CD8-positive, alpha-beta T cell (primary cell): ENCODE measurements at regions of chr17 and their contacts with region 1.

Region 1: DNA sequence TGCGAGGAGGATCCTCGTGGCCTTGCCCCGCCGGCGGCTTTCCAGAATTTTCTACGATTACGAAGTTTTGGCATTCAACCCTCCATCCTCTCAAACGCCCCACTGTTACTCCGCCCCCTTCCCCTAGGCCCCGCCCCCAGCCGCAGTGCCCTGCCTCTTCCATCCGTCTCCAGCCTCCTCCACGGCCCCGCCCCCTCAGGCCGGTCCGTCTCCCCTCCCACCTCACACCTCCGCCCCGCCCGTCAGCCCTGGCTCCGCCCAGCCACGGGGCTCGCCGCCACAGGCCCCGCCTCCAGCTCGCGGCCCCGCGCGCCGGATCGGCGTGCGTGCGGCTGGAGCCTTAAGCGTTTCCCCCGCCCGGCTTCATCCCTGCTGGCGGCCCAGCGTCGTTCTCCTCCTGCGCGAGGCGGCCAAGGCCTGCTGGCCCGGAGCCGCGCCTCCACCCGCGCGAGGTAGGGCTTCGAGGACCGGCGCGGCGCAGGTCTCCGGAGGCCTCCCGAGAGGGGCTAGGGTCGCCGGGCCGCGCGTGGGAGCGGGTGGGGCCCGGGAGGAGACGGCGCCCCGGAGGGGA is at the starts of genes C17orf67 and DGKE:
- DNase-seq: peak; percentile 96 to 99 (median 99)
- ATAC-seq: peak; percentile 88
- H3K4me3 ChIP-seq: peak within 1 kb of the TSS; percentile 78 to 97
- H3K4me3 Mint-ChIP-seq: peak within 1 kb of the TSS; percentile 96
- H3K27ac ChIP-seq: peak within 1 kb of the TSS; percentile 76 to 79
- H3K27ac Mint-ChIP-seq: peak within 1 kb of the TSS; percentile 93
- H3K4me1 ChIP-seq: peaks cover 55% of the 10 kb centered on the region
- H3K4me1 Mint-ChIP-seq: peaks cover 67% of the 10 kb centered on the region
- H3K27me3 ChIP-seq: no peaks in the 10 kb centered on the region
- H3K27me3 Mint-ChIP-seq: no peaks in the 10 kb centered on the region
- CTCF ChIP-seq: no peak
- total RNA-seq, gene C17orf67: 2.4 to 2.9 TPM
- total RNA-seq, gene DGKE: 24.4 to 25.4 TPM

Region 2: GRCh38 chr17:56592487-56593085 is 241.3 kb before region 1 on chr17:
- CTCF ChIA-PET with region 1: no interaction called
- POLR2A ChIA-PET with region 1: interaction called, 3 read pairs
- intact Hi-C with region 1: loop called (anchors 5 kb)
- DNase-seq: peak; percentile 33 to 87 (median 64)
- ATAC-seq: peak; percentile 63
- H3K4me3 ChIP-seq: peak overlapping the region; percentile 50 to 83
- H3K4me3 Mint-ChIP-seq: peak overlapping the region; percentile 80
- H3K27ac ChIP-seq: peak overlapping the region in 1 of 2 experiments; percentile 46
- H3K27ac Mint-ChIP-seq: peak overlapping the region; percentile 49
- H3K4me1 ChIP-seq: peaks cover 8% of the 10 kb centered on the region
- H3K4me1 Mint-ChIP-seq: peaks cover 20% of the 10 kb centered on the region
- H3K27me3 ChIP-seq: peaks cover 0 to 28% of the 10 kb centered on the region in 2 experiments
- H3K27me3 Mint-ChIP-seq: peaks cover 28% of the 10 kb centered on the region
- CTCF ChIP-seq: peak; percentile 80

Region 3: GRCh38 chr17:56773124-56773523 is 60.8 kb before region 1 on chr17:
- CTCF ChIA-PET with region 1: no interaction called
- POLR2A ChIA-PET with region 1: no interaction called
- intact Hi-C with region 1: no loop called
- DNase-seq: no peak
- ATAC-seq: no peak
- H3K4me3 ChIP-seq: no peak overlapping the region
- H3K4me3 Mint-ChIP-seq: no peak overlapping the region
- H3K27ac ChIP-seq: no peak overlapping the region
- H3K27ac Mint-ChIP-seq: no peak overlapping the region
- H3K4me1 ChIP-seq: no peaks in the 10 kb centered on the region
- H3K4me1 Mint-ChIP-seq: no peaks in the 10 kb centered on the region
- H3K27me3 ChIP-seq: no peaks in the 10 kb centered on the region
- H3K27me3 Mint-ChIP-seq: peaks cover 2% of the 10 kb centered on the region
- CTCF ChIP-seq: no peak

Region 4: DNA sequence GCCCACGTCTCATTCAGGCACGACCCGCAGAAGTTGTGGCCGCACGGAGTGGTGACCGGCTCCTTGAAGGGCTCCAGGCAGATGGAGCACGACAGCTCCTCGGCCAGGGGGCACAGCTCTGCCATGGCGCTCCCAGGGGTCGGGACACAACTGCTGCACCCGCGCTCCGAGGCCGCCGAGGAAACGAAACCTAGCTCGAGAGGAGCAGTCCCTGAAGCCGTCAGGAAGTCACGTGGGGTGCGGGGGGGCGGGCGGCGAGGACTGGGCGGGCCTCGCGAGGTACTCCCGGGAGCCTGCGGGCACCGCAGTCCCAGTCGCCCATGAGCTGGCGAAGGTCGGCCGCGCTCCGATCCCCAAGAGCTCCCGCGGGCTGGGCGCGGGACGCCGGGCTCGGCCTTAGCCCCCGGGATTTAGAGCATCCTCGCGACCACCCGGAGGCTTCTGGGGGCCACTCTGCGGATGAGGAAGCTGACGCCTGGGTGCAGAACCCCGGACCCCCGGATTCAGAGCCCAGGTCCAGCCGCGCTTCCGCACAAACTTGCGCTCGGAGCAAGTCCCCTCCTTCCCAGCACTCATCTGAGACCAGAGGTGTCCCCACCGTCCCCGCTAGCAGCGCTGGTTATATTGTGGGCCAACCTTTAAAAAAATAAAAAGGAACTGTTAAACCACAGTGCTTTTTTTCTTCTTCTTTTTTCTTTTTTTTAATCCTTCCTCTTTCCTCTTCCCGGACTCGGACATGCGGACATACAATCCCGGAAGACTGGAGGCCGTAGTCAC is 80.2 kb after region 1 on chr17 and contains the start of gene TRIM25:
- CTCF ChIA-PET with region 1: interaction called, 3 read pairs
- POLR2A ChIA-PET with region 1: interaction called, 32 read pairs
- intact Hi-C with region 1: loop called (anchors 1 kb)
- DNase-seq: peak; percentile 74 to 93 (median 88)
- ATAC-seq: peak; percentile 88
- H3K4me3 ChIP-seq: peak within 1 kb of the TSS; percentile 97 to 99
- H3K4me3 Mint-ChIP-seq: peak within 1 kb of the TSS; percentile 96
- H3K27ac ChIP-seq: peak within 1 kb of the TSS; percentile 78 to 83
- H3K27ac Mint-ChIP-seq: peak within 1 kb of the TSS; percentile 94
- H3K4me1 ChIP-seq: peaks cover 25% of the 10 kb centered on the region
- H3K4me1 Mint-ChIP-seq: peaks cover 41% of the 10 kb centered on the region
- H3K27me3 ChIP-seq: no peaks in the 10 kb centered on the region
- H3K27me3 Mint-ChIP-seq: no peaks in the 10 kb centered on the region
- CTCF ChIP-seq: no peak
- total RNA-seq, gene TRIM25: 28.6 to 30.8 TPM

Region 5: DNA sequence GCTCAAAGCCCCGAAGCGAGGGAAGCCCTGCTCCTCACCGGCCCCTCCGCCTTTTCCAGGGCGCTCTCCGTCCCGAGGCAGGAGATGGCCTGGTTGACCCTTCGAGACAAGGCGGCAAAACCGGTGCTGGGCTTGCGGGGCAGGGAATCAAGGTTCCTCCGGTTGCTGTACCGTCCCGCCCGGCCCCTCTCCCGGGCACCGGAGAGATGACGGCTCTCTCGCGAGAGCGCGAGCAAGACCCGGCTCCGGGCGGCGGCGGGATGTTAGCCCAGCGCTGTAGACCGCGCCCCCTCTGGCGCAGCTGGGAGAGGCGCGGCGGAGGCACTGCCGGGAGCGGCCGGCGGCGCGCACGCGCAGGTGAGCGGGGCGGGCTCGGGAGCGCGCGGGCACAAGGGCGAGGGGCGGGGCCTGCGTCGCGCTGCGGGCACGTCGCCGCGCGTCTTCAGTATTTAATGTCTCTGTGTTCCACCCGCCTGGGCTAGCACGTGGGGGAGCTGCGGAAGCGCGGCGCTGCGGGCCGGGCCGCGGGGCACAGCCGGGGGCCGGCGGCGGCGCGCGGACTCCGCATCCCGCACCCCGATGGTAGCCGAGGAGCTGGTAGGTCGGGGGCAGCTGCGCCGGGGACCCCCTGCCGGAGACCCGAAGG is 251.0 kb after region 1 on chr17 and contains the start of gene AKAP1:
- CTCF ChIA-PET with region 1: no interaction called
- POLR2A ChIA-PET with region 1: interaction called, 4 read pairs
- intact Hi-C with region 1: loop called (anchors 1 kb)
- DNase-seq: peak; percentile 89 to 98 (median 94)
- ATAC-seq: peak; percentile 86
- H3K4me3 ChIP-seq: peak within 1 kb of the TSS; percentile 88 to 95
- H3K4me3 Mint-ChIP-seq: peak within 1 kb of the TSS; percentile 91
- H3K27ac ChIP-seq: peak within 1 kb of the TSS; percentile 87 to 93
- H3K27ac Mint-ChIP-seq: peak within 1 kb of the TSS; percentile 93
- H3K4me1 ChIP-seq: peaks cover 12% of the 10 kb centered on the region
- H3K4me1 Mint-ChIP-seq: peaks cover 38% of the 10 kb centered on the region
- H3K27me3 ChIP-seq: no peaks in the 10 kb centered on the region
- H3K27me3 Mint-ChIP-seq: no peaks in the 10 kb centered on the region
- CTCF ChIP-seq: no peak
- total RNA-seq, gene AKAP1: 20.6 to 23.5 TPM

Region 6: GRCh38 chr17:57916925-57917858 is 1083.3 kb after region 1 on chr17:
- CTCF ChIA-PET with region 1: no interaction called
- POLR2A ChIA-PET with region 1: no interaction called
- intact Hi-C with region 1: no loop called
- DNase-seq: peak in 6 of 9 experiments; percentile 31 to 64 (median 49)
- ATAC-seq: peak; percentile 62
- H3K4me3 ChIP-seq: no peak overlapping the region
- H3K4me3 Mint-ChIP-seq: no peak overlapping the region
- H3K27ac ChIP-seq: no peak overlapping the region
- H3K27ac Mint-ChIP-seq: no peak overlapping the region
- H3K4me1 ChIP-seq: no peaks in the 10 kb centered on the region
- H3K4me1 Mint-ChIP-seq: no peaks in the 10 kb centered on the region
- H3K27me3 ChIP-seq: no peaks in the 10 kb centered on the region
- H3K27me3 Mint-ChIP-seq: peaks cover 2% of the 10 kb centered on the region
- CTCF ChIP-seq: no peak

Region 7: GRCh38 chr17:58006924-58007780 is 1173.3 kb after region 1 on chr17 and contains the start of gene SRSF1:
- CTCF ChIA-PET with region 1: no interaction called
- POLR2A ChIA-PET with region 1: interaction called, 3 read pairs
- intact Hi-C with region 1: loop called in 1 of 2 experiments (anchors 5 kb)
- DNase-seq: peak; percentile 93 to 100 (median 98)
- ATAC-seq: peak; percentile 86
- H3K4me3 ChIP-seq: peak within 1 kb of the TSS; percentile 90 to 100
- H3K4me3 Mint-ChIP-seq: peak within 1 kb of the TSS; percentile 100
- H3K27ac ChIP-seq: peak within 1 kb of the TSS; percentile 85 to 97
- H3K27ac Mint-ChIP-seq: peak within 1 kb of the TSS; percentile 100
- H3K4me1 ChIP-seq: peaks cover 36% of the 10 kb centered on the region
- H3K4me1 Mint-ChIP-seq: peaks cover 55% of the 10 kb centered on the region
- H3K27me3 ChIP-seq: no peaks in the 10 kb centered on the region
- H3K27me3 Mint-ChIP-seq: no peaks in the 10 kb centered on the region
- CTCF ChIP-seq: no peak
- total RNA-seq, gene SRSF1: 79.2 to 94.1 TPM

Region 8: DNA sequence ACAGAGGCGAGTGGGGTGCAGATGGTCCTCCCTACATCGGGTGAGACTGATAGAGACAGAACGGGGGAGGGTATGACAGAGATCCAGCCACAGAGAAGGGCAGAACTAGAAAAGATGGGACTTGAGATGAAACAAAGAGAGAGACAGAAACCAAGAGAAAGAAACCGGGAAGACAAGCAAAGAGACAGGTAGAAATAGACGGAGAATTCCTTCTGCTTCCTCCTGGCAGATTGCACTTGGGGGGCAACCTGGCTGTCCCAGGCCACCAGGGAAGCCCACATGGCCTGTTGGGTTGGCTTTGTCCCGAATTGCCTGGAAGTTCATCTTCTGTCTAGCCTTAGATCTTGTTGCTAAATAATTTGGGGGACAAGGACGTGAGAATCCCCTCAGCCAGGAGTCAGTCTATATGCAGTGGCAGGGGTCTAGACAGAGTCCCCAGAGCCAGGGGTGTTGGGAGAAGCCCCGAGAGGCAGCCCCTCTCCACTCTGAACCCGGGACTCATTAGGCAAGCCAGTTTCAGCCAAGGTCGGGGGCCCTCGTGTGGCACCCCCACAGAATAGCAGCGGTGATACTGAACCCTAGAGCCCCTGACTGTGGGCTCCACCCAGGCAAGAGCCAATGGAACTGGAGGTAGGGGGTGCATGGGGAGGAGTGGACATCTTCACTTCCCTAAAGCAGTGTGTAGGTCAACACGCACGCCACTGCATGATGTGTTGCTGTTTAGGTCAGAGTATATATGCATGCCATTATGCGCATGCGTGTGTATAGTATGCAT is 1495.3 kb after region 1 on chr17:
- CTCF ChIA-PET with region 1: no interaction called
- POLR2A ChIA-PET with region 1: no interaction called
- intact Hi-C with region 1: loop called (anchors 5 to 10 kb)
- DNase-seq: peak in 8 of 9 experiments; percentile 56 to 90 (median 77)
- ATAC-seq: peak; percentile 36
- H3K4me3 ChIP-seq: peak overlapping the region; percentile 90 to 99
- H3K4me3 Mint-ChIP-seq: peak overlapping the region; percentile 92
- H3K27ac ChIP-seq: peak overlapping the region; percentile 48 to 99
- H3K27ac Mint-ChIP-seq: peak overlapping the region; percentile 96
- H3K4me1 ChIP-seq: peaks cover 47% of the 10 kb centered on the region
- H3K4me1 Mint-ChIP-seq: peaks cover 54% of the 10 kb centered on the region
- H3K27me3 ChIP-seq: no peaks in the 10 kb centered on the region
- H3K27me3 Mint-ChIP-seq: no peaks in the 10 kb centered on the region
- CTCF ChIP-seq: peak; percentile 84